A673 (cell line): ENCODE measurements at regions of chr5 and their contacts with region 1.

Region 1: GRCh38 chr5:34891981-34892380 is 23.3 kb downstream of the RAD1 start:
- DNase-seq: no peak
- H3K4me3 ChIP-seq: no peak overlapping the region
- H3K27ac ChIP-seq: no peak overlapping the region
- H3K4me1 ChIP-seq: no peaks in the 10 kb centered on the region
- H3K27me3 ChIP-seq: peaks cover under 1% of the 10 kb centered on the region
- CTCF ChIP-seq: no peak

Region 2: GRCh38 chr5:34486160-34486848 is 405.7 kb before region 1 on chr5:
- CTCF ChIA-PET with region 1: interaction called, 7 read pairs
- POLR2A ChIA-PET with region 1: no interaction called
- intact Hi-C with region 1: loop called (anchors 2 kb)
- DNase-seq: peak; percentile 87
- H3K4me3 ChIP-seq: no peak overlapping the region
- H3K27ac ChIP-seq: no peak overlapping the region
- H3K4me1 ChIP-seq: peaks cover 7% of the 10 kb centered on the region
- H3K27me3 ChIP-seq: no peaks in the 10 kb centered on the region
- CTCF ChIP-seq: peak; percentile 94